Stomach (tissue), 19 donors: ENCODE measurements at regions of chr20 and their contacts with region 1.

Region 1: DNA sequence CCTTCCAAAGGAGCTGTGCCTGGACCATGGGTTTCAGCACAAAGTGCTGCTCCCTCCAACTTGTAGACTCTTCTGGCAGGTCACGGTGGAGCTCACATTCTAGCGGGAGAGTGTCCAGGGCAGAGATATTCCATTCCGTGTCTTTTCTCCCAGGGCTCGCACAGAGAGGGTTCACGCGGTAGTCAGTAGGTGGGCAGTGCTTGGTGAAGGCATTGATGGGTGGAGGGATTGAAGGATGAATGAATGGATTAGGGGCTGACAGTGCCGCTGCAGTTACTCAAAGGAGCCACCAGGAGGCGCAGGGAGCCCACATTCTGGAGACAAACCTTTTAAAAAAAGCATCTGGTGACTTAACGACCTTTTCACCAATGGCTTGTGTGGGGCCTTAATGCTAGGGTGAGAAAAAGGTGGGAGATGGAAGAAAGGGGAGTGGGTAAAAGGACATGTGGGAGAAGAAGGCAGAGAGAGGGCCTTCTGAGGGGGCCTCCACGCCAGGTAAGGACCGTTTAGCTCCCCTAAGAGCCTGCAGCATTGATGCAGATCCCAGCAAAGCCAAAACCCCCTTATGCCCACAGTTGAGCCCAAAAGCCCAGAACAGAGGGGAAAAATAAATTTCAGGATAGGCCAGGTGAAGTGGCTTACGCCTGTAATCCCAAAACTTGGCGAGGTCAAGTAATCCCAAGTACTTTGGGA is 17.5 kb upstream of the FAM110A start:
- DNase-seq: peak; percentile 68 to 84
- H3K4me3 ChIP-seq: no peak overlapping the region
- H3K27ac ChIP-seq: no peak overlapping the region
- H3K4me1 ChIP-seq: peaks cover 0 to 5% (median 2%) of the 10 kb centered on the region in 4 donors
- H3K27me3 ChIP-seq: peaks cover 0 to 48% (median 6%) of the 10 kb centered on the region in 3 donors
- CTCF ChIP-seq: peak in 6 of 7 experiments; percentile 91 to 99 (median 97)
- EP300 ChIP-seq: no peak
- POLR2A ChIP-seq: no peak

Region 2: GRCh38 chr20:956330-956951 is 140.4 kb after region 1 on chr20:
- intact Hi-C with region 1: loop called (anchors 2 kb)
- DNase-seq: peak; percentile 77 to 85
- H3K4me3 ChIP-seq: no peak overlapping the region
- H3K27ac ChIP-seq: no peak overlapping the region
- H3K4me1 ChIP-seq: peaks cover 0 to 5% (median 4%) of the 10 kb centered on the region in 4 donors
- H3K27me3 ChIP-seq: peaks cover 0 to 88% (median 34%) of the 10 kb centered on the region in 3 donors
- CTCF ChIP-seq: peak in 5 of 7 experiments; percentile 92 to 99 (median 97)
- EP300 ChIP-seq: no peak
- POLR2A ChIP-seq: no peak

Region 3: DNA sequence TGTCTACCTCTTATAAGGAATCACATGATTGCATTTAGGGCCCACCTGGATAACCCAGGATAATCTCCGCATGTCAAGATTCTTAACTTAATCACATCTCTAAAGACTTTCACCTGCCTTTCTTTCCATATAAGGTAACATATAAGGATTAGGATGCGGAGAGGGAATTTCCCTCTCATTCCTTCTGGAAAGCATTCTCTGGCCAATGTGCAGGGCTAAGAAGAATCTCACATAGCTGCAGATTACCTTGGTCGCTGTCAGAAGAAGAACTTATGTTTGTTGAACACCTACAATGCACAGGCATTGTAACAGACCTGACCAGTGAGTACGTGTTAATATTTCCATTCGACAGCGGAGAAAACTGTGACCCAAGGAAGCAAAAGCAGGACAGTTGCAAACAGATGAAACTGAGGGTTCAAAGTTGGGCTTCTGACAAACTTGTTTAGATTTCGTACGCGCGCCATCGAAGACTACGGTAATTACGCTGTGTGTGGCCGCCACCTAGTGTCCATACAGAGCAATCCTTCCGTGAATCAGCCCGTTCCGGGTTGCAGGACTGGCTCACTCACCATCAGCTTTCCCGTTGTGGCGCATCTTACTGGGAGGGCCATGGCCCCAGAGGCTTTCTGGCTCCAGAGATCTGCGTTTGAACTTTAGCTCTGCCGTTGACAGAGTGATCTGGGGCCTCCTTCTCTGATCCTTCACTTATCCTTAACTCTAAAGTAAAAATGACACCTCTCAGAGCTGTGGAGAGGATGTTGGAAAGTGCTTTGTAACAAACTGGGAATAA is 396.7 kb after region 1 on chr20:
- intact Hi-C with region 1: loop called (anchors 10 kb)
- DNase-seq: peak; percentile 73 to 88
- H3K4me3 ChIP-seq: no peak overlapping the region
- H3K27ac ChIP-seq: no peak overlapping the region
- H3K4me1 ChIP-seq: peaks cover 0 to 10% (median 4%) of the 10 kb centered on the region in 4 donors
- H3K27me3 ChIP-seq: peaks cover 0 to 46% (median 0%) of the 10 kb centered on the region in 3 donors
- CTCF ChIP-seq: peak in 5 of 7 experiments; percentile 67 to 80 (median 74)
- EP300 ChIP-seq: no peak
- POLR2A ChIP-seq: no peak